ENCODE measurements at regions of chr3 and their contacts with region 1.

Region 1: GRCh38 chr3:128322066-128323022 is 144.3 kb downstream of the DNAJB8 start:
- DNase-seq: peak; percentile 77
- H3K4me3 Mint-ChIP-seq: no peak overlapping the region
- H3K27ac Mint-ChIP-seq: no peak overlapping the region
- H3K4me1 Mint-ChIP-seq: peaks cover 25% of the 10 kb centered on the region
- H3K27me3 Mint-ChIP-seq: no peaks in the 10 kb centered on the region

Region 2: GRCh38 chr3:128226795-128227395 is 95.4 kb before region 1 on chr3:
- CTCF ChIA-PET with region 1: interaction called, 35 read pairs
- DNase-seq: peak; percentile 35
- H3K4me3 Mint-ChIP-seq: no peak overlapping the region
- H3K27ac Mint-ChIP-seq: no peak overlapping the region
- H3K4me1 Mint-ChIP-seq: no peaks in the 10 kb centered on the region
- H3K27me3 Mint-ChIP-seq: no peaks in the 10 kb centered on the region

Region 3: GRCh38 chr3:128307029-128307633 is 15.2 kb before region 1 on chr3:
- CTCF ChIA-PET with region 1: interaction called, 17 read pairs
- DNase-seq: no peak
- H3K4me3 Mint-ChIP-seq: no peak overlapping the region
- H3K27ac Mint-ChIP-seq: no peak overlapping the region
- H3K4me1 Mint-ChIP-seq: no peaks in the 10 kb centered on the region
- H3K27me3 Mint-ChIP-seq: no peaks in the 10 kb centered on the region

Region 4: DNA sequence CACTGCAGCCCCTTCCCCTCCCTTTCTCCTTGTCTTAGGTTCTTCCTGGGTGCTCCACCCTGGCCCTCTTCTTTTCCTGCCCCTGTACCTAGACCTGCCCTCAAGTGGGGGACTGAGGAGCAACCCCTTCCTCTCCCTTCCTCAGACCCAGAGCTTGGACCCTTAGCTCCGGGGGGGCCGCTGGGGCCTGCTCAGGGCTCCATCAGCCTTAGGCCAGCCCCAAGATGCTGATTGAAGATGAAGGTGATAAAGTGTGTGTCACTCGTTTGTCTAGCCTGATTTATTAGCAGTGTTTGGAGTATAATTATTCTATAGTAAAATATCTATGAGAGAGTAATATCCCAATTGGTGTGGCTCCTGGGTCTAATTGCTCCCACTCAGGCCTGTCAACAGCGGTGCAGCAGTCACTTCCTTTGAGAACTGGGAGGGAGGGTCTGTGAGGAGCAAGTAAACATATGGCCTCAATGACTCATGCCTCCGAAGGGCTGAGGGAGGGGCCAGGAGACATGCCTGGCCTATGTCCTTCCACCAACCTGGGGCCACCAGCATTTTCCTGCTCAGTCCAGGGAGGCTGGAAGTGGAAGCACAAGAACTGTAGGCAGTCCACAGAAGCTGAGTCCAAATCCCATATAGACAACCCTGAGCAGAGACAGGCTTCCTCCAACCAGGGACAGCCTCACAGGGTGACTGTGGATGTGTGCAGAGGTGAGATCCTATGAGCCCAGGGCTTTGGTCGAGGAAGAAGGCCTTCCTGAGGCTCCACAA is 21.1 kb after region 1 on chr3:
- CTCF ChIA-PET with region 1: no interaction called
- DNase-seq: no peak
- H3K4me3 Mint-ChIP-seq: no peak overlapping the region
- H3K27ac Mint-ChIP-seq: no peak overlapping the region
- H3K4me1 Mint-ChIP-seq: no peaks in the 10 kb centered on the region
- H3K27me3 Mint-ChIP-seq: no peaks in the 10 kb centered on the region

Region 5: GRCh38 chr3:128416578-128417211 is 94.4 kb after region 1 on chr3:
- CTCF ChIA-PET with region 1: no interaction called
- DNase-seq: no peak
- H3K4me3 Mint-ChIP-seq: no peak overlapping the region
- H3K27ac Mint-ChIP-seq: no peak overlapping the region
- H3K4me1 Mint-ChIP-seq: no peaks in the 10 kb centered on the region
- H3K27me3 Mint-ChIP-seq: no peaks in the 10 kb centered on the region

Measured in activated naive CD4-positive, alpha-beta T cell treated with anti-CD3 and anti-CD28 coated beads, Interleukin-2, amount 10 ng/mL, durations not matched to agents 7 days and 5 days (primary cell).